HEK293 (cell line): ENCODE measurements at regions of chr7 and their contacts with region 1.

Region 1: GRCh38 chr7:106736508-106737201 is 75.7 kb upstream of the CCDC71L start:
- H3K4me3 ChIP-seq: no peak overlapping the region
- H3K27ac ChIP-seq: no peak overlapping the region
- H3K4me1 ChIP-seq: no peaks in the 10 kb centered on the region
- CTCF ChIP-seq: peak; percentile 27; the same call in 1 of the 2 replicates

Region 2: DNA sequence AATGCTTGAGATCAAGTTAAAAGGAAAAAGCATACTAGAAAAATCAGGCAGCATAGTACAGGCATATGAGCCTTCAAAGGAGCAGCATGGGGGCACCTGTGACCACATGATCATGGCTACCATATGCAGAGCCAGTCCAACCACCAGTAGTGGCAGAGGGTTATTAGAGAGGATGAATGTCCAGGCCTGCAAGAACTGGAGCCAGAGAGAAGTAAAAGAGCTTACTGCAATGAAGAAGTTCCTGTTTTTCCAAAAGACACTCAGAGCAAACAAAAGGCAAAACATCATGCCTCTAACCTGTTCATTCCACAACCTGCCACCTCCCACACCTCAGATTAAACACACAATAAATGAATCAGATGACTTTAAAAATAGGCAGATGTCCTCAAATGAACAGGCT is 352.3 kb before region 1 on chr7:
- CTCF ChIA-PET with region 1: no interaction called
- POLR2A ChIA-PET with region 1: no interaction called
- H3K4me3 ChIP-seq: no peak overlapping the region
- H3K27ac ChIP-seq: no peak overlapping the region
- H3K4me1 ChIP-seq: no peaks in the 10 kb centered on the region
- CTCF ChIP-seq: no peak

Region 3: GRCh38 chr7:106659963-106660861 is 76.4 kb before region 1 on chr7:
- CTCF ChIA-PET with region 1: interaction called, 15 read pairs
- POLR2A ChIA-PET with region 1: no interaction called
- H3K4me3 ChIP-seq: peak overlapping the region; percentile 94
- H3K27ac ChIP-seq: peak overlapping the region; percentile 86
- H3K4me1 ChIP-seq: no peaks in the 10 kb centered on the region
- CTCF ChIP-seq: peak; percentile 92

Region 4: GRCh38 chr7:106870983-106871410 is 134.3 kb after region 1 on chr7:
- CTCF ChIA-PET with region 1: no interaction called
- POLR2A ChIA-PET with region 1: no interaction called
- H3K4me3 ChIP-seq: no peak overlapping the region
- H3K27ac ChIP-seq: no peak overlapping the region
- H3K4me1 ChIP-seq: no peaks in the 10 kb centered on the region
- CTCF ChIP-seq: no peak